ENCODE measurements at regions of chr9 and their contacts with region 1.

Region 1: GRCh38 chr9:19241506-19242127 is 11.1 kb downstream of the DENND4C start:
- H3K4me3 ChIP-seq: no peak overlapping the region
- H3K27ac ChIP-seq: no peak overlapping the region
- H3K4me1 ChIP-seq: peaks cover 6% of the 10 kb centered on the region
- CTCF ChIP-seq: no peak

Region 2: DNA sequence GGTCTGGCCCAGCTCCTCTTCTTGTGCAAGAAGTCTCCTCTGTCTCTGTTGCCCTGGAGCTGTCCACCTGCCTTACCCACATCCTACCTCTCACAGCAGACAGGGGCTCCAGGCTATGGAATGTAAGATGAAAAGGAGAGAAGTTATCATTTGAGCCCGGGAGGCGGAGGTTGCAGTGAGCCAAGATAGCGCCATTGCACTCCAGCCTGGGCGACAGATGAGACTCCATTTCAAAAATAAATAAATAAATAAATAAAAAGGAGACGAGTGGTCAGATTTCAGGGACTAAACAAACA is 48.6 kb before region 1 on chr9:
- CTCF ChIA-PET with region 1: interaction called, 10 read pairs
- POLR2A ChIA-PET with region 1: no interaction called
- H3K4me3 ChIP-seq: no peak overlapping the region
- H3K27ac ChIP-seq: no peak overlapping the region
- H3K4me1 ChIP-seq: no peaks in the 10 kb centered on the region
- CTCF ChIP-seq: no peak

Region 3: GRCh38 chr9:19252174-19252884 is 10.7 kb after region 1 on chr9:
- CTCF ChIA-PET with region 1: interaction called, 10 read pairs
- POLR2A ChIA-PET with region 1: no interaction called
- H3K4me3 ChIP-seq: no peak overlapping the region
- H3K27ac ChIP-seq: no peak overlapping the region
- H3K4me1 ChIP-seq: no peaks in the 10 kb centered on the region
- CTCF ChIP-seq: no peak

Region 4: GRCh38 chr9:19313573-19313972 is 72.0 kb after region 1 on chr9:
- CTCF ChIA-PET with region 1: no interaction called
- POLR2A ChIA-PET with region 1: no interaction called
- H3K4me3 ChIP-seq: no peak overlapping the region
- H3K27ac ChIP-seq: no peak overlapping the region
- H3K4me1 ChIP-seq: peaks cover 3% of the 10 kb centered on the region; the same call in 1 of the 2 replicates
- CTCF ChIP-seq: no peak

Region 5: DNA sequence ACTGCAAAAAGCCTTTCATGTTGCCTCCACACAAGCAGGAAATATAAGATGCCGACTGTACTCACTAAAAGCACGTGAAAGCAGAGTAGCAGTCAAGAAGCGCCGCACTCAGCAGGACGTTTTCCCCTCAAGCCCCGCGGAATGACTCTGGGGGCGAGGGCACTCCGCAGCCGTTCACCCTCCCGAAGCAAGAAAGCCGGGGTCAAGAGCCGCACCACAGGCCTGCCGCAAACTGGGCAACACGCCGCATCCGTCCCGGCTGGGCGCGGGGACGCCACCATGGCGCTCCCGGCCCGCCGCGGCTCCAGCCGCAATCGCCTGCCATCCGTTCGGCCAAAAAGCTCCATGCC is 138.1 kb after region 1 on chr9:
- CTCF ChIA-PET with region 1: no interaction called
- POLR2A ChIA-PET with region 1: no interaction called
- H3K4me3 ChIP-seq: peak overlapping the region; percentile 74
- H3K27ac ChIP-seq: peak overlapping the region; percentile 99
- H3K4me1 ChIP-seq: no peaks in the 10 kb centered on the region
- CTCF ChIP-seq: no peak

Measured in HEK293 (cell line).